Body of pancreas (tissue), 4 donors: ENCODE measurements at regions of chr12 and their contacts with region 1.

Region 1: DNA sequence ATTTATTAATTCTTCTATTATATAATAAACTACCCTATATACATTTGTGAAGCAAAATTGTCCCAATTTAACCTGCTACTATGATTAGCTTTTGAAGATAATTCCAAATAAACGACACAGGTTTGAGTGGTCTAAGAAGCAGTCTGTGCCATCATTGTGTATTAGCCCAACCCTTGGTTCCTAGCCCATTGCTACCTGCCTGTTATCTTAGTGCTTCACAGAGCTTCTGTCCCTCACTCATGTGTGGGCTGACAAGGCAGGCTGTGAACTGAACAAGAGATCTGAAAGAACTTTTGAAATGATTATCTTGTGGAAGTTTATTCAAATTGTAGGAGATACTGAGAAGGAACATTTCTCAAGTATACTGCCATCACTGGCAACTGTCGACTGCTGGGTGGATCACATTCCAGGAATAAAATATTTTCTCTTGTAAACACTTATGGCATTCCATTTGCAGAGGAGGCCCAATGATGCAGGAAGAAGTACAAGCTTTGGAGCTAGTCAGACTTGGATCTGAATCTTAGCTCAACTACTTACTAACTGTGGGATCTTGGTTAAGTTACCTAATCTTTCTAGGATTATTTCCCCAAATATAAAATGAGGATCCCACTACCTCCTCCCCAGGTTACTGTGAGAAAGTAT is 7.8 kb upstream of the MTERF2 start:
- DNase-seq: no peak
- ATAC-seq: no peak
- H3K4me3 ChIP-seq: no peak overlapping the region
- H3K27ac ChIP-seq: no peak overlapping the region
- H3K4me1 ChIP-seq: no peaks in the 10 kb centered on the region
- H3K27me3 ChIP-seq: no peaks in the 10 kb centered on the region
- CTCF ChIP-seq: no peak
- POLR2A ChIP-seq: no peak

Region 2: DNA sequence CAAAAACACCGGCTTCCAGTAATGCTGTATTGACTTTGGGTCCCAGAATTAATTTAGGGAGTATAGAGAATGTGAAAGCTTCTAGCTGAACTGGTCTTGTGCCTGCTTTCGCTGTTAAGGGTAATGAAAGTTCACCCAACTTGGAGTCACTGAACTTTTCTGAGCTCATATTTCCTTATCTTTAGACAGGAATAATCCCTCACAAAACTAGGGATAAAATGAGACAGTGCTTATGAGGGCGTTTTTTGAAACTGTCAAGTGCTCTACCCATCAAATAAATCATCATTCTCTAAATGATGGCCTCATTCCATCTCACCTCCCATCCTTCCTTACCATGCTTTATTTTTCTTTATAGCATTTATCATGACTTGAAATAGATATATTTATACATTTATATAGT is 337.2 kb before region 1 on chr12:
- intact Hi-C with region 1: no loop called
- DNase-seq: no peak
- ATAC-seq: no peak
- H3K4me3 ChIP-seq: no peak overlapping the region
- H3K27ac ChIP-seq: no peak overlapping the region
- H3K4me1 ChIP-seq: no peaks in the 10 kb centered on the region
- H3K27me3 ChIP-seq: no peaks in the 10 kb centered on the region
- CTCF ChIP-seq: no peak
- POLR2A ChIP-seq: no peak

Region 3: GRCh38 chr12:107109741-107110719 is 115.3 kb after region 1 on chr12:
- intact Hi-C with region 1: loop called (anchors 10 kb)
- DNase-seq: no peak
- ATAC-seq: no peak
- H3K4me3 ChIP-seq: no peak overlapping the region
- H3K27ac ChIP-seq: no peak overlapping the region
- H3K4me1 ChIP-seq: no peaks in the 10 kb centered on the region
- H3K27me3 ChIP-seq: no peaks in the 10 kb centered on the region
- CTCF ChIP-seq: no peak
- POLR2A ChIP-seq: no peak